ENCODE measurements at regions of chr5 and their contacts with region 1.

Region 1: DNA sequence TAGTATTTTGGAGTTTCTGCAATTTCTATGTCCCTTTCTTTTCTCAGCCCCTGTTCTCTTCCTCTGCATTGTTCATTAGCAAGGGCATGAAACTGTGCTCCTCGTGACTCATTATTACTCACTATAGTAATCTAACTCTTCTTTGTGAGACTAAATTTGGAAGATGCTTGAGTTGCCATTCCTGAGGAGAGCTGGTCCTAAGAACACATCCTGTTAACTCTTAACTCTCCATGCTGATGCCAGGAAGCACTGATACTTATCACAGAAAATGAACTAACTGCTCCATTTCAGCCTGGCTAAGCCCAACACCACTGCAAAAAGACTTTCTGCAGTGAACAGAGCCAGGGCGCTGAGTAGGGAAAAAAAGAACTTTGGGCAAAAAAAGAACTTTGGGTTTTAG is 10.6 kb upstream of the CSNK1A1 start:
- H3K4me3 ChIP-seq: no peak overlapping the region
- H3K27ac ChIP-seq: no peak overlapping the region; the same call in 1 of the 2 replicates
- H3K4me1 ChIP-seq: peaks cover 8% of the 10 kb centered on the region; the same call in 1 of the 2 replicates
- CTCF ChIP-seq: no peak

Region 2: GRCh38 chr5:149367249-149367971 is 194.4 kb before region 1 on chr5:
- CTCF ChIA-PET with region 1: interaction called, 10 read pairs
- POLR2A ChIA-PET with region 1: no interaction called
- H3K4me3 ChIP-seq: no peak overlapping the region
- H3K27ac ChIP-seq: no peak overlapping the region
- H3K4me1 ChIP-seq: no peaks in the 10 kb centered on the region
- CTCF ChIP-seq: peak; percentile 86

Region 3: DNA sequence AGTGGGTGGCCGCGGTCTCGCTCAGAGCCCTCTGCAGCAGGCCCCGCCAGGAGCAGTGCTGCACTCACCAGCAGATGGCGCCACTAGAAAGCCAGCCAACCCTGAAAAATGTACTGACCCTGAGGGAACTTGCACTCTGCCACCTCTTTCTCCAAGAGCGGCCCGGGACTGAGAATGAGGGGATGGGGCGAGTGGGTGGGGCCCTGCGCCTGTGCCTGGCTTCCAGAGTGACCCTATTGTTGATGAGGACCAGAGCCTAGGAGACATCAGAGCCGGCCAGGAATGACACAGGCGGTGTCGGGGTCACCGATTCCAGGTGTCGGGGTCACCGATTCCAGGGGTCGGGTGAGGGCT is 179.9 kb before region 1 on chr5:
- CTCF ChIA-PET with region 1: interaction called, 29 read pairs
- POLR2A ChIA-PET with region 1: no interaction called
- H3K4me3 ChIP-seq: no peak overlapping the region
- H3K27ac ChIP-seq: no peak overlapping the region
- H3K4me1 ChIP-seq: no peaks in the 10 kb centered on the region
- CTCF ChIP-seq: peak; percentile 89

Region 4: GRCh38 chr5:149442563-149443182 is 119.2 kb before region 1 on chr5:
- CTCF ChIA-PET with region 1: interaction called, 54 read pairs
- POLR2A ChIA-PET with region 1: interaction called, 3 read pairs
- H3K4me3 ChIP-seq: no peak overlapping the region
- H3K27ac ChIP-seq: no peak overlapping the region
- H3K4me1 ChIP-seq: no peaks in the 10 kb centered on the region
- CTCF ChIP-seq: peak; percentile 88

Region 5: DNA sequence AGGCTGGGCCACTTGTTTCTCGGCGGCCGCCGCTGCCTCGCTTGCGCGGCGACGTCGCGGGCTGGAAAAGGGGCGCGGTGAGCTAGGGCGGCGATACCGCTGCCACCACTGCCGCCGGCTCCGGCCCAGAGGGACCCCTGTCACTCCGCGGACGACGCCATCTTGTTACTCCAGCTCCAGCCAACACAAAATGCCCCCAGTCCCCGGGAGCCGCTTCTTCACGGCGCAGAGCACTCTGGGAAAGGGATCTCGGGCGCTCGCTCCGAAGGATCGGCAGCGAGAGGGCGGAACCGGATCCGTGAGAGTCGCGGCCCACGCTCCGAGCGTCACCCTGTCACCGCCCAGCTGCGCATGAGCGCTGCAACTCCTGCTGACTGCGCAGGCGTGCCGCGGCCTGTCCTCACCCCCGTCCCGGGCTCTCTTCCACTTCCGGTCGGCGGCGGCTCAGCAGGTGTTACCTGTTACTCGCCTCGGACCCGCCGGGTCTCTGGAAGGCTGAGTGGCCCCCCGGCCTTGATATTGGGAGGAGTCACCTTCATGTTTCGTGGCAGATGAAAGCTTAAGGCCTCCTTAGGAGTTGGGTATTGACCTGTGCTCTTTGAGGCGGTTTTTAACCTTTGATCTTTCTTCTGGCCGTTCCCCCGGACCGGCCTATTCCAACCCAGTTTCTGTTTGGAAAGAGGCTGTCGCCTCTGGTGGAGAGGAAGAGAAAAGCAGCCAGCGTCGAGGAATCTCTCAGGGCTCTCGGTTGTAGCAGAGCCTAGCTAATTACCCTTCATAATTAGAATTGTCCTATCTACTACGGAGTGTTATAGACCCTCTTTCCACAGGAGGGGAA is 10.4 kb before region 1 on chr5 and contains the start of gene CSNK1A1:
- CTCF ChIA-PET with region 1: interaction called, 13 read pairs
- POLR2A ChIA-PET with region 1: interaction called, 28 read pairs
- H3K4me3 ChIP-seq: peak within 1 kb of the TSS; percentile 94
- H3K27ac ChIP-seq: peak within 1 kb of the TSS; percentile 97
- H3K4me1 ChIP-seq: peaks cover 11% of the 10 kb centered on the region
- CTCF ChIP-seq: peak; percentile 55; the same call in 1 of the 2 replicates

Region 6: GRCh38 chr5:149581192-149581861 is 19.5 kb after region 1 on chr5 and contains the start of gene ARHGEF37:
- CTCF ChIA-PET with region 1: interaction called, 17 read pairs
- POLR2A ChIA-PET with region 1: no interaction called
- H3K4me3 ChIP-seq: peak within 1 kb of the TSS; percentile 46
- H3K27ac ChIP-seq: peak within 1 kb of the TSS; percentile 67; the same call in 1 of the 2 replicates
- H3K4me1 ChIP-seq: peaks cover 4% of the 10 kb centered on the region
- CTCF ChIP-seq: no peak

Region 7: GRCh38 chr5:149618581-149619251 is 56.9 kb after region 1 on chr5:
- CTCF ChIA-PET with region 1: interaction called, 16 read pairs
- POLR2A ChIA-PET with region 1: interaction called, 3 read pairs
- H3K4me3 ChIP-seq: no peak overlapping the region
- H3K27ac ChIP-seq: no peak overlapping the region
- H3K4me1 ChIP-seq: no peaks in the 10 kb centered on the region
- CTCF ChIP-seq: peak; percentile 77

Region 8: GRCh38 chr5:149711338-149711737 is 149.5 kb after region 1 on chr5:
- CTCF ChIA-PET with region 1: no interaction called
- POLR2A ChIA-PET with region 1: no interaction called
- H3K4me3 ChIP-seq: no peak overlapping the region
- H3K27ac ChIP-seq: no peak overlapping the region
- H3K4me1 ChIP-seq: no peaks in the 10 kb centered on the region
- CTCF ChIP-seq: no peak